ENCODE measurements at regions of chr19 and their contacts with region 1.

Region 1: DNA sequence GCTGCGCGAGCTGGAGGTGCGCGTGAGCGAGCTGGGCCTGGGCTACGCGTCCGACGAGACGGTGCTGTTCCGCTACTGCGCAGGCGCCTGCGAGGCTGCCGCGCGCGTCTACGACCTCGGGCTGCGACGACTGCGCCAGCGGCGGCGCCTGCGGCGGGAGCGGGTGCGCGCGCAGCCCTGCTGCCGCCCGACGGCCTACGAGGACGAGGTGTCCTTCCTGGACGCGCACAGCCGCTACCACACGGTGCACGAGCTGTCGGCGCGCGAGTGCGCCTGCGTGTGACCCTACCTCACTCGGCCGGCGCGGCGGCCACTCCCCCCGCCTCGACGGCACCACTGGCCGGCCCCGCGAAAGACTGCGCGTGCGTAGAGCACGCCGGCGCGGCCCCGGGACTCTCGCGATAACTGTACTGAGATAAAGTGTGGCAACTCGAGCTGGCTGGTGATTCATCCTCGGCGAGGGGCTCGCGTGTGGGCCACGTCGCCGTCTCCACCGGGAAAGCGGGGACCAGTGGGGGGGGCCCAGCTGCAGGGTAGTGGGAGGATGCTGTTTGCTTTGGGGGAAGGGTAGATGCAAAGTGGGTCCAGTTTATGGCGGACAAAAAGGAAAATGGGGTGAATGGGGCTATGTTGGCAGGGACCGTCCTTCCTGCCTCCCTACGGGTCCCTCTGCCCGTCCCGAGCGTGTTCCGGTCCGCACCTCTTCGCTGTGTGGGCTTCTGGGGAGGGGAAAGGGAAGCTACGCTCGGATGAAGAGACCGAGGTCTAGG is 11.4 kb downstream of the FUT6 start:
- DNase-seq: peak; percentile 88
- ATAC-seq: peak; percentile 83
- H3K4me3 ChIP-seq: peak overlapping the region; percentile 83 to 97
- H3K27ac ChIP-seq: peak overlapping the region; percentile 92
- H3K4me1 ChIP-seq: peaks cover 15 to 38% of the 10 kb centered on the region in 2 experiments
- H3K27me3 ChIP-seq: no peaks in the 10 kb centered on the region
- CTCF ChIP-seq: no peak
- POLR2A ChIP-seq: peak; percentile 99
- RAD21 ChIP-seq: no peak

Region 2: GRCh38 chr19:5775668-5776309 is 52.3 kb before region 1 on chr19:
- CTCF ChIA-PET with region 1: interaction called, 3 read pairs
- POLR2A ChIA-PET with region 1: interaction called, 3 read pairs
- RAD21 ChIA-PET with region 1: no interaction called
- intact Hi-C with region 1: loop called (anchors 1 kb)
- DNase-seq: no peak
- ATAC-seq: no peak
- H3K4me3 ChIP-seq: no peak overlapping the region
- H3K27ac ChIP-seq: no peak overlapping the region
- H3K4me1 ChIP-seq: peaks cover 0 to 11% of the 10 kb centered on the region in 2 experiments; a peak in 3 of 4 replicates
- H3K27me3 ChIP-seq: no peaks in the 10 kb centered on the region
- CTCF ChIP-seq: no peak
- POLR2A ChIP-seq: no peak
- RAD21 ChIP-seq: no peak

Region 3: DNA sequence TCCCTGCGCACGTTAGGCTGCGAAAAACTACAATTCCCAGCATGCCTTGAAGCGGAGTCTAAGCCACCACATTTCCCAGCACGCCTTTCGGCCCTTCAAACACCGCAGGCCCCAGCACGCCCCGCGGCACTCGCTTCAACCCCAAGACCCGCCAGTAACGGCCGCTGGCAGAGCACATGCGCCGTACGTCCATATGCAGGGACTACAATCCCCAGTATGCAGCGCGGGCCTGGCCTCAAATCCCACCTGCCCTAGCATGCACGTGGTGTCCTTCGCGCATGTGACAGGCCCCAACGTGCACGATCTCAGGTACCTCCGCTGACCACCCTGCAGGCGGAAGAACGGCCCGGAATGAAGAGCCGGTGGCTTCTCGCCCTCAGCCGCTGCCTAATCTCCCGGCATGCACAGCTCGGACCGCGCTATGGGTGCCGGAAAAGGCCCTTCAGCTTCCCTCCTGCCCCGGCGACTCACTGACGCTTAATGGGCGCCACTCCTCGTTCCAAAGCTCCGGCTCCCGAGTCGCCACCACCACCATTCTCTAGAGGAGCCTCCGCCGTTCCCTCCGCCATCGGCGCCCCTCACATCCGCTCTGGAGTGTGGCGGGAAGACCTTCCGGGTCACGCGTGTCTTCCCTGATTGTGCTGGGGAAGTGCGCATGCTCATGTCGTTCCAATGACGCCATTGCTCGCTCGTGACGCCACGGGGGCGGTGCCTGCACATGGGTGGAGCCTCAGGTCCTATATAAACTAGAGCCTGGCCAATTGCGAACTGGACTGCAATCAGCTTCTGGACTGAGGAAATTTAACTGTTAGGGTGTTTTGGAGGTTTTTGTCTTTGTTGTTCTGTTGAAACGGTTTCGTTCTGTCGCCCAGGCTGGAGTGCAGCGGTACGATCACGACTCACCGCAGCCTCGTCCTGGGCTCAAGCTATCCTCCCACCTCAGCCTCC is 37.2 kb before region 1 on chr19 and contains the start of gene DUS3L:
- CTCF ChIA-PET with region 1: interaction called, 4 read pairs
- POLR2A ChIA-PET with region 1: interaction called, 14 read pairs
- RAD21 ChIA-PET with region 1: no interaction called
- intact Hi-C with region 1: no loop called
- DNase-seq: peak; percentile 97
- ATAC-seq: peak; percentile 91
- H3K4me3 ChIP-seq: peak within 1 kb of the TSS; percentile 72 to 85
- H3K27ac ChIP-seq: peak within 1 kb of the TSS; percentile 96
- H3K4me1 ChIP-seq: peaks cover 9 to 22% of the 10 kb centered on the region in 2 experiments; a peak in 3 of 4 replicates
- H3K27me3 ChIP-seq: no peaks in the 10 kb centered on the region
- CTCF ChIP-seq: no peak
- POLR2A ChIP-seq: peak; percentile 97
- RAD21 ChIP-seq: no peak
- total RNA-seq, gene DUS3L: 78.1 TPM

Region 4: DNA sequence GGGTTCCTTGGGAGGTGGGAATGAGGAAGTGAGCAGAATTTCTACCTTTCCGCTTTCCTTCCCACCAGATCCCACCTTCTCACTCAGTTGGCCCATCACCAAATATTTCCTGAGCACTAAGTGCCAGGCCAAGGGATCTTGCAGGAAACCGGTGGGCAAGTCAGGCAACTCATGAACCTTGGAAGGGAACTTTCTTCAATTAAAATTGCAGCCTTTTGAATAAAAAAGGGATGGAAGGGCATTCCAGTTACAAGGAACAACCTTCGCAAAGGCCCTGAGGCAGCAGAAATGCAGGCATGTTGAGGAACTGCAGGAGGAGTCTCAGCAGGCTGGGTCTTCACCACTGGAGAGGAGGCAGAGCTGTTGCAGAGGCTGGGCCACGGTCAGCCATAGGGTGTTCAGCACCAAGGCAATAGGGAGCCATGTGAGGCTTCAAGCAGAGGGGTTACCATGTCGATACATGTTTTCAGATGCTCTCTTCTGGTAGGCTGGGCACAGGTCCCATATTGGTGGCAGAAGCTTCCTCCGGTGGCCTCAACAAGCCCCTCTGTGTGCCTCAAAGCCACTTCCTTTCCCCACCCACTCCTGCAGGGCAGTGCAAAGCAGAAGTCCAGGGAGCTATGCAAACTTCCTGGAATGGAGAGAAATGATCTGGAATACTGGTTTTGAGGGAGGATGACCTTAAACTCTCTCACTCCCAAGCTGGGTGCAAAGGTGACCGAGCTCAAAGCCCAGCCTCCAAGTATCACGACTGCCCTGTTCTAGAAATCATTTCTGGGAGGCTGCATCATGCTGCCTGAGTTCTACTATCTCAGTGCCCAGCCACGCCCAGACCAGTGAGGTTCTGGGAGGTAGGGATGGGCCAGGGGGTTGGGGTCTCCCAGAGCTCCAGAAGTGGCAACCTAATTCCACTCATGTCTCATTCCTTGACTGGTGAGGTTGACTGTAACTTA is 11.3 kb after region 1 on chr19 and contains the start of gene FUT6:
- CTCF ChIA-PET with region 1: interaction called, 3 read pairs
- POLR2A ChIA-PET with region 1: interaction called, 28 read pairs
- RAD21 ChIA-PET with region 1: interaction called in 1 of 2 experiments, 6 read pairs
- intact Hi-C with region 1: no loop called
- DNase-seq: no peak
- ATAC-seq: no peak; the same call in 1 of the 2 replicates
- H3K4me3 ChIP-seq: no peak within 1 kb of the TSS
- H3K27ac ChIP-seq: no peak within 1 kb of the TSS
- H3K4me1 ChIP-seq: peaks cover 9 to 18% of the 10 kb centered on the region in 2 experiments; a peak in 2 of 4 replicates
- H3K27me3 ChIP-seq: no peaks in the 10 kb centered on the region
- CTCF ChIP-seq: no peak
- POLR2A ChIP-seq: no peak
- RAD21 ChIP-seq: no peak
- total RNA-seq, gene FUT6: not detected

Region 5: DNA sequence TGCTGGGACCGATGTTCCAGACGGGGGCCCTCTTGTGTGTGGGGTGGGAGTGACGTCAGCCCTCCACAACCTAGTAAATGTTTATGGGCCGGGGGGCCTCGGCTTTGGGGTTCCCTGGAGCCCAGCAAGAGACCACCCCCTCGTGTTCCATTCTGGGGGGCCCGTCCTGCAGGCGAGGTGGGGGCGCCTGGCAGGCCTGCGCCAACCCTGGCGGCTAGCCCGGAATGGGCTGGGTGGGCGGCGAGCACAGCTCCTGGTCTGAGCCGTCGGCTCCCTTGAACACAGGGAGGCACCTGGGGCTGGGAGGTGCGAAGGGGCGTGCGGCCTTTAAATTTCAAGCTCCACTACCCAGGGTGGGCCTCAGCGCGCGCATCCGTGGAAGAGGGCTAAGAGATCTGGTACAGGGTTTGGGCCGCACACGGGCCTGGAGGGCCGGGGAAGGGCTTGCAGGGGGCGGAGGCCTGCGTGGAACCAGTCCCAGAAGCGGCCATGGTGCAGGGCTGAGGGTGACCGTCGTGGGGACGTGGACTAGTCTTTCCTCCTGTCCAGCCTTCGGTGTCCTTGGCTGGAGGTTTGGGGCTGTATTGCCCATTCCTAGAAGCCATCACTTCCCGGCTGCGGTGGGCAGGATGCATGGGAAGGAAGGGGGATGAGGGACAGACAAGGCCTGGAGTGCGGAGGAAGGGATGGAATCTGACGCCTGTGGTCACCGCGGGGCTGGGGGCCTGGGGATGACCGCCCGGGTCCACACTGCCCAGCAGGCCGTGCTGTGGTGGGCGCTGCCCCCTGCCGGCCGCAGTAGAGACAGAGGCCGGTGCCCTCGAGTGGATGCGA is 64.1 kb after region 1 on chr19:
- CTCF ChIA-PET with region 1: interaction called, 3 read pairs
- POLR2A ChIA-PET with region 1: interaction called, 4 read pairs
- RAD21 ChIA-PET with region 1: no interaction called
- intact Hi-C with region 1: loop called (anchors 2 kb)
- DNase-seq: no peak
- ATAC-seq: peak; percentile 80
- H3K4me3 ChIP-seq: no peak overlapping the region
- H3K27ac ChIP-seq: no peak overlapping the region
- H3K4me1 ChIP-seq: peaks cover 0 to 3% of the 10 kb centered on the region in 2 experiments; a peak in 1 of 4 replicates
- H3K27me3 ChIP-seq: no peaks in the 10 kb centered on the region
- CTCF ChIP-seq: peak; percentile 77 to 84 (median 83)
- POLR2A ChIP-seq: no peak
- RAD21 ChIP-seq: peak; percentile 86

Region 6: DNA sequence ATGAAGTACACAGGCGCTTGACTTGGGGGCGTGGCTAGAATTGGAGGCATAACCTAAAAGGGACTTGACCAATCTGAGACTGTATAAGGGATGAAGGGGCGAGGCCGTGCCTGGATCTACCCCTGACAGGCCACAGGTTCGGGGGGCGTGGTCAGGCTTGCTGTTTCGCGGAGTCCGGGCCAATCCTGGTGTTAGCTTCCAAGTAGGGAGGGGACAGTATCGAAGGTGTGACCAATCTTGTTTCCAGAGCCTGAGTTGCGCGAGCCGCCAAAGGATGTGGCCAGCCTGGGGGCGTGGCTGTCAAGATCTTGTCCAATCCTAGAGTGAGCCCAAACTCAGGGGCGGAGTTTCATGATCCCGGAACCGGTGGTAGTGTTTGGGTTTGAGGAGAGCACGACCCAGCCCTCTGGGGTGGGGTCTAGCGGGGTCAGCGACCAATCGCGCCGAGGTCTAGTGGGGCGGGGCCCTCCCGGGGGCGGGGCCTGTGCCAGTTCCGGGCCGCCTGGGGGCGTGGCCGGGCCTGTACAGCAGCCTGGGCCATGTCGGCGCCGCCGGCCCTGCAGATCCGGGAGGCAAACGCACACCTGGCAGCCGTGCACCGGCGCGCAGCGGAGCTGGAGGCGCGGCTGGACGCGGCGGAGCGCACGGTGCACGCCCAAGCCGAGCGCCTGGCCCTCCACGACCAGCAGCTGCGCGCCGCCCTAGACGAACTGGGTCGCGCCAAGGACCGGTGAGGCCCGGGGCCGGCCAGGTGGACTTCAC is 76.5 kb after region 1 on chr19 and contains the start of gene VMAC:
- CTCF ChIA-PET with region 1: interaction called, 7 read pairs
- POLR2A ChIA-PET with region 1: interaction called, 34 read pairs
- RAD21 ChIA-PET with region 1: no interaction called
- intact Hi-C with region 1: loop called (anchors 2 kb)
- DNase-seq: peak; percentile 100
- ATAC-seq: peak; percentile 82
- H3K4me3 ChIP-seq: peak within 1 kb of the TSS; percentile 100
- H3K27ac ChIP-seq: peak within 1 kb of the TSS; percentile 94
- H3K4me1 ChIP-seq: peaks cover 9 to 24% of the 10 kb centered on the region in 2 experiments; a peak in 3 of 4 replicates
- H3K27me3 ChIP-seq: no peaks in the 10 kb centered on the region
- CTCF ChIP-seq: no peak
- POLR2A ChIP-seq: peak; percentile 37
- RAD21 ChIP-seq: no peak
- total RNA-seq, gene VMAC: 2.1 TPM

Region 7: DNA sequence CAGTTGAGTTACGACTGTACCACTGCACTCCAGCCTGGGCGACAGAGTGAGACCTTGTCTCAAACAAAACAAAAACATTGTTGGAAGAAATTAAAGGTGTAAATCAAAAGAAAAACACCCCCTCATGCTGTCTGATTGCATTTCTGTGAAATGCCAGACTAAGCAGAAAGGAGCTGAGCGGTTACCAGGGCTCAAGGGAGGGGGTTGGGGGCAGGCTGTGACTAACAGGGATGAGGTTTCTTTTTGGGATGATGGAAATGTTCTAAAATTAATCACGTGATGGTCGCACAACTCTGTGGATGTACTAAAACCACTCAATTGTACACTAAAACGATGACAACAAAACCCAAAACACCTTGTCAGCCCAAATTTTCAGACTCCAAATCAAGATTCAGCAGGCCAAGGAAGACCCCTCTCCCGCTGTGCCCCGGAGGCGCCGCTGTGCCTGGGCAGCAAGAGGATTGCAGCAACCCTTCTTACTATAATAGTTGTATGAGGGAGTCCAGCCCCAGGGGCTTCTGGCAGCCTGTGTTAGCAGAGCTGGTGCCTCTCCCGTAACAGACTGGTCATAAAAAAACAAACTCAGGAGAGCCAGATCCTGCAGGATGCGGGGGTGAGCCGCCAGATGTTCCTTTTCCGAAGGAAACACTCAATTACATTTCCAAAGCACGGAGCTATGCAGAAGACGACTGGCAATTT is 106.8 kb after region 1 on chr19:
- CTCF ChIA-PET with region 1: no interaction called
- POLR2A ChIA-PET with region 1: no interaction called
- RAD21 ChIA-PET with region 1: no interaction called
- intact Hi-C with region 1: no loop called
- DNase-seq: no peak
- ATAC-seq: no peak
- H3K4me3 ChIP-seq: no peak overlapping the region
- H3K27ac ChIP-seq: no peak overlapping the region
- H3K4me1 ChIP-seq: no peaks in the 10 kb centered on the region
- H3K27me3 ChIP-seq: no peaks in the 10 kb centered on the region
- CTCF ChIP-seq: no peak
- POLR2A ChIP-seq: no peak
- RAD21 ChIP-seq: no peak

Measured in HCT116 (cell line).